CD4-positive, alpha-beta memory T cell (primary cell): ENCODE measurements at regions of chr2 and their contacts with region 1.

Region 1: GRCh38 chr2:222057347-222058073 is 241.3 kb downstream of the PAX3 start:
- DNase-seq: peak in 2 of 5 donors; percentile 3 to 5
- H3K4me3 ChIP-seq: no peak overlapping the region
- H3K4me3 Mint-ChIP-seq: no peak overlapping the region
- H3K27ac ChIP-seq: no peak overlapping the region
- H3K27ac Mint-ChIP-seq: no peak overlapping the region
- H3K4me1 ChIP-seq: no peaks in the 10 kb centered on the region
- H3K4me1 Mint-ChIP-seq: no peaks in the 10 kb centered on the region
- H3K27me3 ChIP-seq: peaks cover 2% of the 10 kb centered on the region
- H3K27me3 Mint-ChIP-seq: peaks cover 15 to 19% of the 10 kb centered on the region in 2 donors

Region 2: GRCh38 chr2:220999356-220999755 is 1058.2 kb before region 1 on chr2:
- CTCF ChIA-PET with region 1: no interaction called
- POLR2A ChIA-PET with region 1: no interaction called
- intact Hi-C with region 1: no loop called
- DNase-seq: no peak
- H3K4me3 ChIP-seq: no peak overlapping the region
- H3K4me3 Mint-ChIP-seq: no peak overlapping the region
- H3K27ac ChIP-seq: no peak overlapping the region
- H3K27ac Mint-ChIP-seq: no peak overlapping the region
- H3K4me1 ChIP-seq: no peaks in the 10 kb centered on the region
- H3K4me1 Mint-ChIP-seq: no peaks in the 10 kb centered on the region
- H3K27me3 ChIP-seq: no peaks in the 10 kb centered on the region
- H3K27me3 Mint-ChIP-seq: peaks cover 0 to 3% of the 10 kb centered on the region in 2 donors

Region 3: GRCh38 chr2:222613715-222614331 is 556.3 kb after region 1 on chr2:
- CTCF ChIA-PET with region 1: interaction called, 10 read pairs
- POLR2A ChIA-PET with region 1: no interaction called
- intact Hi-C with region 1: no loop called
- DNase-seq: peak in 4 of 5 donors; percentile 2 to 23 (median 16)
- H3K4me3 ChIP-seq: no peak overlapping the region
- H3K4me3 Mint-ChIP-seq: no peak overlapping the region
- H3K27ac ChIP-seq: no peak overlapping the region
- H3K27ac Mint-ChIP-seq: peak overlapping the region in 1 of 7 donors; percentile 36
- H3K4me1 ChIP-seq: no peaks in the 10 kb centered on the region
- H3K4me1 Mint-ChIP-seq: no peaks in the 10 kb centered on the region
- H3K27me3 ChIP-seq: no peaks in the 10 kb centered on the region
- H3K27me3 Mint-ChIP-seq: no peaks in the 10 kb centered on the region